PC-9 (cell line): ENCODE measurements at regions of chr14 and their contacts with region 1.

Region 1: DNA sequence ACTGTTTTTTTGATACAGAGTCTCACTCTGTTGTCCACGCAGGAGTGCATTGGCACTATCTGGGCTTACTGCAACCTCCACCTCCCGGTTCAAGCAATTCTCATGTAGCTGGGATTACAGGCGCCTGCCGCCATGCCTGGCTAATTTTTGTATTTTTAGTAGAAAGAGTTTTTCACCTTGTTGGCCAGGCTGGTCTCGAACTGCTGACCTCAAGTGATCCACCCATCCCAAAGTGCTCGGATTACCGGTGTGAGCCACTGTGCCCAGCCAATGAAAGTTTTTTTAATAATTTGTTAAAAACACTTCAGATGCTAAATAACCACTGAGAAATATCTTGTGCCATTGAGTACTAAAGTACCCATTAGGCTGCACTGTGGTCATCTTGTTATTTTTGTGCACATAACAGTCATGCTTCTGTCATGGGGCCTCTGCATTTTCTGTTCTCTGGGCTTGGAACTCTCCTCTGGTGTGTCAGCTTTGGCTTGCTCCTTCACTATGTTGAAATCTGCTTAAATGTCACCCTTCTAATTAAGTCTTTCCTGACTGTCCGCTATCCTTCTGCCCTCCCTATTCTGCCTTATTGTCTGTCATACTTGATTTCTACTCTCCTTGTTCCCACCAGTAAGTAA is 105.1 kb downstream of the KTN1 start:
- DNase-seq: no peak
- H3K4me3 ChIP-seq: no peak overlapping the region
- H3K27ac ChIP-seq: no peak overlapping the region
- H3K4me1 ChIP-seq: 0 out of 2 replicates have a peak, but pooled peaks cover 8% of the 10 kb centered on the region
- H3K27me3 ChIP-seq: no peaks in the 10 kb centered on the region
- CTCF ChIP-seq: no peak

Region 2: GRCh38 chr14:55641954-55642353 is 43.1 kb before region 1 on chr14:
- CTCF ChIA-PET with region 1: no interaction called
- POLR2A ChIA-PET with region 1: no interaction called
- intact Hi-C with region 1: loop called (anchors 5 kb)
- DNase-seq: no peak
- H3K4me3 ChIP-seq: no peak overlapping the region
- H3K27ac ChIP-seq: no peak overlapping the region
- H3K4me1 ChIP-seq: no peaks in the 10 kb centered on the region
- H3K27me3 ChIP-seq: no peaks in the 10 kb centered on the region
- CTCF ChIP-seq: no peak